AG04449 (cell line): ENCODE measurements at regions of chr11 and their contacts with region 1.

Region 1: GRCh38 chr11:63671322-63672155 is at the start of gene ATL3:
- DNase-seq: peak; percentile 53
- H3K4me3 ChIP-seq: peak within 1 kb of the TSS; percentile 79
- CTCF ChIP-seq: peak; percentile 10

Region 2: GRCh38 chr11:63417174-63417852 is 254.2 kb before region 1 on chr11:
- CTCF ChIA-PET with region 1: no interaction called
- POLR2A ChIA-PET with region 1: no interaction called
- DNase-seq: no peak
- H3K4me3 ChIP-seq: no peak overlapping the region
- CTCF ChIP-seq: no peak

Region 3: GRCh38 chr11:63698976-63699733 is 27.6 kb after region 1 on chr11:
- CTCF ChIA-PET with region 1: interaction called, 10 read pairs
- POLR2A ChIA-PET with region 1: no interaction called
- DNase-seq: no peak
- H3K4me3 ChIP-seq: no peak overlapping the region
- CTCF ChIP-seq: no peak

Region 4: GRCh38 chr11:64396079-64396591 is 724.6 kb after region 1 on chr11:
- CTCF ChIA-PET with region 1: no interaction called
- POLR2A ChIA-PET with region 1: no interaction called
- DNase-seq: no peak
- H3K4me3 ChIP-seq: no peak overlapping the region
- CTCF ChIP-seq: no peak